ENCODE measurements at regions of chr20 and their contacts with region 1.

Region 1: GRCh38 chr20:1576641-1577040 is 19.1 kb upstream of the SIRPD start:
- DNase-seq: no peak
- ATAC-seq: no peak
- H3K4me3 ChIP-seq: no peak overlapping the region
- H3K4me3 Mint-ChIP-seq: no peak overlapping the region
- H3K27ac ChIP-seq: no peak overlapping the region
- H3K27ac Mint-ChIP-seq: no peak overlapping the region
- H3K4me1 ChIP-seq: no peaks in the 10 kb centered on the region
- H3K4me1 Mint-ChIP-seq: peaks cover 0 to 6% (median 4%) of the 10 kb centered on the region in 7 donors
- H3K27me3 ChIP-seq: no peaks in the 10 kb centered on the region
- H3K27me3 Mint-ChIP-seq: no peaks in the 10 kb centered on the region

Region 2: GRCh38 chr20:1616858-1617434 is 40.3 kb after region 1 on chr20:
- CTCF ChIA-PET with region 1: no interaction called
- POLR2A ChIA-PET with region 1: no interaction called
- intact Hi-C with region 1: loop called in 1 of 2 experiments (anchors 2 kb)
- DNase-seq: no peak
- ATAC-seq: no peak
- H3K4me3 ChIP-seq: no peak overlapping the region
- H3K4me3 Mint-ChIP-seq: no peak overlapping the region
- H3K27ac ChIP-seq: no peak overlapping the region
- H3K27ac Mint-ChIP-seq: no peak overlapping the region
- H3K4me1 ChIP-seq: peaks cover 21 to 28% of the 10 kb centered on the region in 2 donors
- H3K4me1 Mint-ChIP-seq: peaks cover 31 to 51% (median 41%) of the 10 kb centered on the region in 7 donors
- H3K27me3 ChIP-seq: no peaks in the 10 kb centered on the region
- H3K27me3 Mint-ChIP-seq: no peaks in the 10 kb centered on the region